ENCODE measurements at regions of chr12 and their contacts with region 1.

Region 1: GRCh38 chr12:106078358-106079010 is 60.3 kb downstream of the NUAK1 start:
- DNase-seq: no peak
- ATAC-seq: peak; percentile 75

Region 2: GRCh38 chr12:105820429-105821140 is 257.9 kb before region 1 on chr12:
- intact Hi-C with region 1: loop called (anchors 5 kb)
- DNase-seq: no peak
- ATAC-seq: peak; percentile 82

Region 3: DNA sequence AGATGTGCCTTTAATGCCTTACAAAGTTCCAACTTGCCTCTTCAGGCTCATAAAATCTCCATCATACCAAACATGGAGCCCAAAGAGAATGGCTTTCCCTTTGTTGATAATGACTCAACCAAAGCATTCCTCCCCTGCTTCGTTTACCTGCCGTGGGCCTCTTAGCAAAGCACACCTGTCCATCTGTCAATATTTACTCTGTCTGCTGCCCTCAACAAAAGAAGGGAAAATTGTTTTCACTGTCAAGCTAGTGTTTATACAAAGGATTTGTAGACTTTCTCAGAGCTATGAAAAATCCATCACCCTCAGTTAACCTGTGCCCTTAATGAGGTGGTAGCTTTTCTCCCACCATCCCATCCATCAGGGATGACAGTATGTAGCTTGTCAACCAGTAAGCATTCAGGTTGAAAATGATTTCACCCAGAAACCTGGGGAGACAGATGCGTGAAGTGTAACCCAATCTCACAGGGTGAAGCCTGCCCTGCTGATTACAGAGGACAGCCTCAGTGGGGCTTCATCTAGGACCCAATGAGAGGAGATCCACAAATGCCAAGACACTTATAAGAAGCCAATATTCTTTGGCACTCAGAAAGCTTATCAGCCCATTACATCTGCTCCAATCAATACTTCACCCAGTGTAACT is 217.8 kb before region 1 on chr12:
- intact Hi-C with region 1: no loop called
- DNase-seq: no peak
- ATAC-seq: no peak

Region 4: GRCh38 chr12:105960319-105961083 is 118.0 kb before region 1 on chr12:
- intact Hi-C with region 1: no loop called
- DNase-seq: no peak
- ATAC-seq: peak; percentile 66

Region 5: DNA sequence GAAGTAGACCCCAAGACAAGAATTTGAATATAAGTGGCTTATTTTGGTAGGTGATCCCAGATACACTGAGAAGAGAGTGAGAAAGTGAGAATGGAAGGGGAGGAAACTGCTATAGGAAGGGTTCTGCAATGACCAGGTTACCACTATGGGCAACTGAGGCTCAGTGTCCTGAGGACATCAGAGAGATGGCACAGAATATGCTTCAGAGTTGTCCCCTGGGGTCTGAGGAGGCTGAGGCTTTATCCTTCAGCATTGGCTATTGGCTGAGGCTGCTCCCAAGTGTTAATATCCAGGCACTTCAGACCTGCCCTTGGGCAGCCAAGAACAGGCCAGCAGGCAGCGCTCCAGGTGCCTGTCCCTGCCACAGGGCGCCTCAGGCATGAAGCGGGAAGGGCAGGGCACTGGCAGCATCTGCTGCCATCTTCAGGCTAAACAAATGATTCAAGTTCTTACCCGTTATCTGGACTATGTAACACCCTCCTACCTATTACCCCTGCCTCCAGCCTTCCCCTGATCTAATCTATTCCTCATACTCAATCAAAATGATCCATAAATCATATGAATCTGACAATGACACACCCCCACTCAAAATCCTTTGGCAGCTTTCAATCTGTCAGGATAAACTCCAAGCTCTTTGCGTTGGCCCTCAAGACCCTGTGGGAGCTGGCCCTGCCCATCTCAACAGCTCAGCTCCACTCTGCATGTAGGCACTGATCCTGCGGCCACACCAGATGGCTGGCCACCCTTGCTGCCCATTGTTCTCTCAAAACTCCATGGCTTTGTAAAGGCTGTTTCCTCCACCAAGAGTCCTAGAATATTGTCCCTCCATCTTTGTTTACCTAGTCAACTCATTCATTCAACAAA is 127.0 kb after region 1 on chr12:
- intact Hi-C with region 1: loop called (anchors 10 kb)
- DNase-seq: peak; percentile 76
- ATAC-seq: peak; percentile 99

Region 6: DNA sequence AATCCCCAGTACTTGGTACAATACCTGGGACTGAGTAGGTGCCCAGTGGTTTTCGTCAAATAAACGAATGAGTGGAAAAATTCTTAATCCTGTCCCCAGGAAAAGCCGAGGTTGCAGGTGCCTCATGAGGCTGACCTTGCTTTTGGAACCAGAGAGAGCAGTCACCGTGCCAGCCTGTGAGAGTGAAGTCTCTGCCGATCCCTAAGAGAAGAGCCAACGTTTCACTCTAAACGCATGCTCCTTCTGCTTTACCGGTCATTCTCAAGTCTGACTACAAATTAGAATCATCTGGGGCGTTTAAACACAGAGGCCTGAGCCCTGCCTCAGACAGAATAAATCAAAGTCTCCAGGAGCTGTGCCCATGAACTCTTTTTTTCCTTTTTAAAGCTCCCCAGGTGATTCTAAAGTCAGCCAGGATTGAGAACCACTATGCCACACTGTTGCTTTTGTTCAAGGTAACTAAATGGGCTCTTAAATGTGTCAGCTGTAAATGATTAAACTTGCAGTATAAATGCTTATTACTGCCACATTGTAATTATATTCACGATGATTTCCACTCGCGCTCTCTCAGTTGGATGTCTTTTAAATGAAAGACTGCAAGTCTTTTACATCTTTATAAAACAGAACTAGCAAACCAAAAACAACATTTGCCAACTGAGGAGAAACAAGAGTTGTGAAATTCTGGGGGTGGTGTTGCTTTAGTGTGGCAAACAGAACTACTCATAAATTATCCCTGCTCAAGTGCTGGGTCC is 250.9 kb after region 1 on chr12:
- intact Hi-C with region 1: no loop called
- DNase-seq: no peak
- ATAC-seq: peak; percentile 58

Measured in Right ventricle myocardium inferior (tissue), 1 donor.